Activated T-helper 1 cell treated with anti-CD3 and anti-CD28 coated beads, Interleukin-12 subunit alpha, Interleukin-12 subunit beta, Interleukin-2, Interleukin-4 antibody, amounts not matched to agents 30 ng/mL and 10 ng/mL and 1 ng/mL, durations not matched to agents 14 hours and 24 hours and 36 hours (primary cell): ENCODE measurements at regions of chr4 and their contacts with region 1.

Region 1: GRCh38 chr4:155953151-155954114 is at the start of gene CTSO:
- DNase-seq: peak; percentile 69
- H3K4me3 Mint-ChIP-seq: peak within 1 kb of the TSS; percentile 98
- H3K27ac Mint-ChIP-seq: peak within 1 kb of the TSS; percentile 98
- H3K4me1 Mint-ChIP-seq: peaks cover 10% of the 10 kb centered on the region
- H3K27me3 Mint-ChIP-seq: peaks cover 8% of the 10 kb centered on the region
- total RNA-seq, gene CTSO: 0.73 and 0.93 TPM in 2 replicates

Region 2: GRCh38 chr4:154551872-154552686 is 1401.4 kb before region 1 on chr4:
- intact Hi-C with region 1: loop called (anchors 2 kb)
- DNase-seq: peak; percentile 46
- H3K4me3 Mint-ChIP-seq: no peak overlapping the region
- H3K27ac Mint-ChIP-seq: no peak overlapping the region
- H3K4me1 Mint-ChIP-seq: peaks cover 28% of the 10 kb centered on the region
- H3K27me3 Mint-ChIP-seq: peaks cover 4% of the 10 kb centered on the region

Region 3: DNA sequence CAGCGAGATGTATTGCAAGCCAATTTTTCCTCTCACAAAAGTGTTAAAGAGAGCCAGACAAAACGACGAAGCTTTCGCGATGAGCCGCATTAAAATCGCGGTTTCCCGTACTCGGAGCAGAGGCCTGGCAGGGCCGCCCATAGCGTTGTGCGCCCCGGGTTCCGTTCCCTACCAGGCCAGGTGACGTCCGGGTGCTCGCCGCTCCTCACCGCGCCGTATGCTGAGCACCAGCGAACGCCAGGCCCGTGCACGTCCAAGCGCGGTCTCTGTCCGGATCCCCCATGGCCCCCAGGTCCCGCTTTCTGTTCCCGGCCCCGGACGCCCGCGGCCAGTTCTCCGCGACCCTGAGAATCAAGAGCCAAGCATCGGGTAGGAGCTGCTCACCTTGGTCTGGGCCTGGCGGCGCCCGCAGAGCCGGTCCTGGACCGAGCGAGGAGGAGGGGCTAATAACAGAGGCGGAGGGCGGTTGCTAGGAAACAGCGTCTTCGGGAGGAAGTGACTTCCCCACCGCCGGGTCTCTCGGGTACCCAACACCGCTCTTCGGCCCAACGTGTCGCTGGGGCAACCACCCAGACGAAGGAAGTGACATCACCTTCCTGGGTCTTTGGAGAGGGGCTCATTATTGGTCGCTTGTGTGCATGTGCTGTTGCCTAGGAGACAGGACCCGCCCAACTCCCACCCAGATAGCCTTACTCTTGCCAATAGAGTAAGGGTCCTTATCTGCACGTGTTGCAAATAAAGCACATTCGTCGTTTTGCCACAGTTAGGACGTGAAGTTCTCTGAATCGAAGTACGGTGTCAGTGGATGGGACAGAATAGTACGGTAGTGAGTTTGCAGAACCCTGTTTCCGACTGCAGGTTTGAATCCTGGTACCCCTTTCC is 576.8 kb before region 1 on chr4 and contains the start of gene MAP9:
- intact Hi-C with region 1: loop called (anchors 2 kb)
- DNase-seq: peak; percentile 82
- H3K4me3 Mint-ChIP-seq: peak within 1 kb of the TSS; percentile 82
- H3K27ac Mint-ChIP-seq: peak within 1 kb of the TSS; percentile 60
- H3K4me1 Mint-ChIP-seq: peaks cover 19% of the 10 kb centered on the region
- H3K27me3 Mint-ChIP-seq: peaks cover 4% of the 10 kb centered on the region
- total RNA-seq, gene MAP9: 5.9 and 6.2 TPM in 2 replicates

Region 4: GRCh38 chr4:155675709-155676429 is 277.6 kb before region 1 on chr4:
- intact Hi-C with region 1: loop called (anchors 10 kb)
- DNase-seq: no peak
- H3K4me3 Mint-ChIP-seq: no peak overlapping the region
- H3K27ac Mint-ChIP-seq: no peak overlapping the region
- H3K4me1 Mint-ChIP-seq: no peaks in the 10 kb centered on the region
- H3K27me3 Mint-ChIP-seq: peaks cover 12% of the 10 kb centered on the region

Region 5: GRCh38 chr4:155809835-155810234 is 143.6 kb before region 1 on chr4:
- intact Hi-C with region 1: loop called (anchors 1 kb)
- DNase-seq: no peak
- H3K4me3 Mint-ChIP-seq: no peak overlapping the region
- H3K27ac Mint-ChIP-seq: no peak overlapping the region
- H3K4me1 Mint-ChIP-seq: no peaks in the 10 kb centered on the region
- H3K27me3 Mint-ChIP-seq: peaks cover 7% of the 10 kb centered on the region

Region 6: DNA sequence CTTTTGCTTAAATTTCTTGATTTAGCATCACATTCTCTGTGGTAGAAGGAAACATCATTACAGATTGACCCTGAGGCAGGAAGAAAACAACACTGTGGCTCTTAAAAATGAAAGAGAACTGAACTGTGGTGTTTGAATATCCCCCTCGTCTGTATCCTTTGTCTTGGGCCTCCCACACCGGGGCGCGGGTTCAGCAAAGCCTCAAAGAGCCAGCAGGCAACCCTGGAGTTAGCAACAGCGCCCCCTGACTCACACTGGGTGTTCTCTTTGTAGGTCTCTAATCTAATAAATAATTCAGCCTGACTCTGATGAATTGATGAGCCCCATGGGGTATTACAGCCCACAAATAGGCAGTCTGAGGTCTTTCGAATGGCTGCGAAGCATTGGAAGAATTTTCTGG is 46.3 kb after region 1 on chr4:
- intact Hi-C with region 1: no loop called
- DNase-seq: no peak
- H3K4me3 Mint-ChIP-seq: no peak overlapping the region
- H3K27ac Mint-ChIP-seq: no peak overlapping the region
- H3K4me1 Mint-ChIP-seq: no peaks in the 10 kb centered on the region
- H3K27me3 Mint-ChIP-seq: no peaks in the 10 kb centered on the region

Region 7: DNA sequence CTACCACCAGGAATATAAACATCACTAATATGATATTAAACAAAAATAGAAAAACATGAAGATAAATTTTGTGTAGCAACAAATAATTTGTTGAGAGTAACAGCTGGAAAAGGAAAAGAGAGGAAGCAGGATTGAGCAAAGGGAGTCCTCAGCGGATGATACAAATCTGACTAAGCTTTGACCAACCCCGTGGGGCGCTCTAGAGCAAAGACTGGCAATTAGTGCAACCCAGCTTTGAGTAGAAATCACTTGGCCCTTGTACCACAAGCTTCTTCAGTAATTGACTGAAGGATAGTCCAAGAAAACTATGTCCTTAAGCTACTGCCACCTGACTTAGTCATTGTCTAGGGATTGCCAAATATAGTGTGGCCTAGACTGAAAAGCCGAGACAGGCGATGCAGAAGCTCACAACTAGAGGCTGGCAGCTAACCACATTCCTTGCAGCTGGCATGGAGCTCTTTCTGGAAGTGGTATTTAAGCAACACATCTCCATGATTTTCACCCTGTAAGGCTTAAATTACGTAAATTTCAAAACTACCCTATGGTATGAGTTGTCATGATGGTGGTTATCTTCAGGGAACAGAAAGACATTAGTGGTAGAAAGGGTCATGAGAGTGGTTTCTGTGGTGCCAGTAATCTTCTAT is 622.1 kb after region 1 on chr4:
- intact Hi-C with region 1: no loop called
- DNase-seq: no peak
- H3K4me3 Mint-ChIP-seq: no peak overlapping the region
- H3K27ac Mint-ChIP-seq: no peak overlapping the region
- H3K4me1 Mint-ChIP-seq: no peaks in the 10 kb centered on the region
- H3K27me3 Mint-ChIP-seq: no peaks in the 10 kb centered on the region